ENCODE measurements at regions of chr1 and their contacts with region 1.

Region 1: DNA sequence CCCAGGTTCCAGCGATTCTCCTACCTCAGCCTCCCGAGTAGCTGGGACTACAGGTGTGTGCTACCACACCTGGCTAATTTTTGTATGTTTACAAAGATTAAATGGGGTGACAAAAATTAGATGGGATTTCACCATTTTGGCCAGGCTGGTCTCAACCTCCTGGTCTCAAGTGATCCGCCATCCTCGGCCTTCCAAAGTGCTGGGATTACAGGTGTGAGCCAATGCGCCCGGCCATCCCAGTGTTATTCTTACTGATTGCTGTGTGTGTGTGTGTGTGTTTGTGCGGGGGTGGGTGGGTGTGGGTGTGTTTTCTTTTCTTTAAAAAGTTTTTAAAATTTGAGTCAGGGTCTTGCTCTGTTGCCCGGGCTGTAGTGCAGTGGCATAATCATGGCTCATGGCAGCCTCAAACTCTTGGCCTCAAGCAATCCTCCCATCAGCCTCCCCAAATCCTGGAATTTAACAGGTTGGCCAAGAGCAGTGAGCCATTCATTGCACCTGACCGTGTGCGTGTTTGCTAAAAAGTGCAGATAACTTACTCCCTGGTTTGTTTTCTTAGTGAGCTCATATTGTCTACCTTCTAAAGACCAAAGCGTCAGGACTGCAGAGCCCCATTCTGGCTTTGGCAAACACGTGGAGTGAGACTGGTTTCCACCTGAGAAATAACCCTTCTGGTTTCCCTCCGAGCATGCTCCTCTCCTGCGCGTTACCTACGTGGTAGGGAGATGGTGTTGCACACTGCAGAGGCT is 32.4 kb upstream of the CA6 start:
- DNase-seq: no peak
- ATAC-seq: no peak
- H3K4me3 ChIP-seq: no peak overlapping the region
- H3K27ac ChIP-seq: no peak overlapping the region
- H3K4me1 ChIP-seq: peaks cover 4 to 7% of the 10 kb centered on the region in 2 experiments; a peak in 4 of 5 replicates
- H3K27me3 ChIP-seq: peaks cover 5 to 19% of the 10 kb centered on the region in 2 experiments; a peak in 3 of 5 replicates
- CTCF ChIP-seq: no peak
- EP300 ChIP-seq: no peak
- POLR2A ChIP-seq: no peak
- RAD21 ChIP-seq: no peak

Region 2: GRCh38 chr1:8763888-8764287 is 149.4 kb before region 1 on chr1:
- CTCF ChIA-PET with region 1: no interaction called
- POLR2A ChIA-PET with region 1: no interaction called
- in situ Hi-C with region 1: no loop called
- intact Hi-C with region 1: no loop called
- DNase-seq: peak; percentile 54 to 81 (median 69)
- ATAC-seq: peak; percentile 90
- H3K4me3 ChIP-seq: no peak overlapping the region
- H3K27ac ChIP-seq: no peak overlapping the region
- H3K4me1 ChIP-seq: peaks cover 10 to 26% of the 10 kb centered on the region in 2 experiments; a peak in 4 of 5 replicates
- H3K27me3 ChIP-seq: no peaks in the 10 kb centered on the region
- CTCF ChIP-seq: peak; percentile 58 to 73 (median 60)
- EP300 ChIP-seq: peak; percentile 41; the same call in 1 of the 2 replicates
- POLR2A ChIP-seq: no peak
- RAD21 ChIP-seq: peak in 1 of 2 experiments; percentile 46; a peak in 2 of 4 replicates

Region 3: DNA sequence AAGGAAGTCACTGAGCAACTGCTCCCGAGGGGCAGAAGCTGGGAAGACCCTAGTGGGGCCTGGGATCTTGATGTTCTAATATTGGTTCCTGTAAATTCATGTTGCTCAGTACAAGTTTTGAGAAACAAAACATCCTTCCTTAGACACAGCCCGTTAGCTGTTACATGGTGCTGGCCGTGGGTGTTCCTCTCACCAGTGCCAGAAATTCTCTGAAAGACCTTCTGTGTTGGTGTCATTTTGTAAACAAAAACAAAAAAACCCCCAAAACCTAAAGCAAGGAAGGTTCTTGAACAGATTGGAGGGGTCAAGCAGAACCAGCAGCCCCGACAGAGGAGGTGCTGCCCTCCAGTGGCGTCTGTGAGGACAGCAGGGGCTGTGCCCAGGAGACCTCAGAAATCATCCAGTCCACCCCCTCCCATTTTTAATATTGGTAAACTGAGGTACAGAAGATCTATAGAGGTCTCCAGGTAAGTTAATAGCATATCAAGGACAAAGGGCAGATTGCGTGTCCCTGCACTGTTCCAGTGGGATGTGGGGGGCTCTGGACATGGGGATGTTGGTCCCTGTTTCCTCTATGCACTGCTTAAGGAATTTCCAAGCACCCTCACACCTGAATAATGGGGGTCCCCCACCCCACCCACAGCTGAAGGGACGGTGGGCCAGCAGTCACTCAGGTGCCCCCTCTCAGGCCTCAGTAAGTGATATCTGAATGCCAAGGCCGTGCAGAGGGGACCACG is 74.8 kb after region 1 on chr1:
- CTCF ChIA-PET with region 1: interaction called, 23 read pairs
- POLR2A ChIA-PET with region 1: no interaction called
- in situ Hi-C with region 1: loop called (anchors 5 kb)
- intact Hi-C with region 1: loop called (anchors 1 kb)
- DNase-seq: peak; percentile 62 to 86 (median 80)
- ATAC-seq: peak; percentile 95
- H3K4me3 ChIP-seq: no peak overlapping the region
- H3K27ac ChIP-seq: no peak overlapping the region
- H3K4me1 ChIP-seq: no peaks in the 10 kb centered on the region
- H3K27me3 ChIP-seq: peaks cover 9 to 32% of the 10 kb centered on the region in 2 experiments
- CTCF ChIP-seq: peak; percentile 87 to 97 (median 91)
- EP300 ChIP-seq: no peak
- POLR2A ChIP-seq: no peak
- RAD21 ChIP-seq: peak; percentile 56 to 79

Region 4: GRCh38 chr1:9004700-9005394 is 91.6 kb after region 1 on chr1:
- CTCF ChIA-PET with region 1: interaction called, 20 read pairs
- POLR2A ChIA-PET with region 1: interaction called, 4 read pairs
- in situ Hi-C with region 1: no loop called
- intact Hi-C with region 1: loop called (anchors 1 kb)
- DNase-seq: peak; percentile 86 to 91 (median 90)
- ATAC-seq: peak; percentile 96
- H3K4me3 ChIP-seq: no peak overlapping the region
- H3K27ac ChIP-seq: no peak overlapping the region
- H3K4me1 ChIP-seq: peaks cover 0 to 6% of the 10 kb centered on the region in 2 experiments; a peak in 2 of 5 replicates
- H3K27me3 ChIP-seq: peaks cover 46 to 79% of the 10 kb centered on the region in 2 experiments
- CTCF ChIP-seq: peak; percentile 93 to 98 (median 98)
- EP300 ChIP-seq: no peak
- POLR2A ChIP-seq: no peak
- RAD21 ChIP-seq: peak; percentile 59 to 83

Region 5: DNA sequence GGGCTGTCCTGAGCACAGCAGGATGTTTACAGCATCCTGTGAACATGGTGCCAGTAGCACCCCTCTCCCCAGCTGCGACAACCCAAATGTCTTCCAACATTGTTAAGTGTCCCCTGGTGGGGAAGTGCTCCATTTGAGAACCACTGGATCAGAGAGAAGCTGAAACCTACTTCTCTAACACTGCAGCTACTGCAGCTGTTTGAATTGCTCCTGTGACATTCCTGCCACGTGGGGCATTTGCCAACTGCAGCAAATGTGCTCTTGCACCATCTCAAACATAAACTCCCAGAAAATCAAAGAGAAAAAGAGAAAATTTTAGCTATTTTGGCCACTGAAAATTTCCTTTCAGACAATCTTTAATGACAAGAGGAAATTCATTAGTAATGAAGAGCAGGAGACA is 145.2 kb after region 1 on chr1:
- CTCF ChIA-PET with region 1: no interaction called
- POLR2A ChIA-PET with region 1: no interaction called
- in situ Hi-C with region 1: no loop called
- intact Hi-C with region 1: no loop called
- DNase-seq: peak in 2 of 4 experiments; percentile 3
- ATAC-seq: no peak; the same call in 2 of the 3 replicates
- H3K4me3 ChIP-seq: no peak overlapping the region
- H3K27ac ChIP-seq: no peak overlapping the region
- H3K4me1 ChIP-seq: no peaks in the 10 kb centered on the region
- H3K27me3 ChIP-seq: peaks cover 12 to 35% of the 10 kb centered on the region in 2 experiments
- CTCF ChIP-seq: no peak
- EP300 ChIP-seq: no peak
- POLR2A ChIP-seq: no peak
- RAD21 ChIP-seq: no peak

Region 6: GRCh38 chr1:9101510-9102146 is 188.3 kb after region 1 on chr1:
- CTCF ChIA-PET with region 1: interaction called, 9 read pairs
- POLR2A ChIA-PET with region 1: no interaction called
- in situ Hi-C with region 1: no loop called
- intact Hi-C with region 1: loop called (anchors 1 kb)
- DNase-seq: peak; percentile 29 to 66 (median 50)
- ATAC-seq: peak; percentile 94
- H3K4me3 ChIP-seq: no peak overlapping the region
- H3K27ac ChIP-seq: no peak overlapping the region
- H3K4me1 ChIP-seq: no peaks in the 10 kb centered on the region; a peak in 1 of 5 replicates
- H3K27me3 ChIP-seq: peaks cover 41 to 72% of the 10 kb centered on the region in 2 experiments
- CTCF ChIP-seq: peak; percentile 78 to 88 (median 81)
- EP300 ChIP-seq: no peak
- POLR2A ChIP-seq: no peak
- RAD21 ChIP-seq: peak; percentile 71 to 80

Region 7: GRCh38 chr1:9196129-9197040 is 283.1 kb after region 1 on chr1:
- CTCF ChIA-PET with region 1: no interaction called
- POLR2A ChIA-PET with region 1: no interaction called
- in situ Hi-C with region 1: no loop called
- intact Hi-C with region 1: loop called (anchors 5 kb)
- DNase-seq: peak; percentile 65 to 71 (median 68)
- ATAC-seq: peak; percentile 93
- H3K4me3 ChIP-seq: no peak overlapping the region
- H3K27ac ChIP-seq: no peak overlapping the region
- H3K4me1 ChIP-seq: peaks cover 0 to 3% of the 10 kb centered on the region in 2 experiments; a peak in 1 of 5 replicates
- H3K27me3 ChIP-seq: peaks cover 53 to 76% of the 10 kb centered on the region in 2 experiments
- CTCF ChIP-seq: peak; percentile 90 to 97 (median 94)
- EP300 ChIP-seq: no peak
- POLR2A ChIP-seq: no peak
- RAD21 ChIP-seq: peak; percentile 96

Measured in K562 (cell line).